Endothelial cell of umbilical vein (primary cell): ENCODE measurements at regions of chr16 and their contacts with region 1.

Region 1: DNA sequence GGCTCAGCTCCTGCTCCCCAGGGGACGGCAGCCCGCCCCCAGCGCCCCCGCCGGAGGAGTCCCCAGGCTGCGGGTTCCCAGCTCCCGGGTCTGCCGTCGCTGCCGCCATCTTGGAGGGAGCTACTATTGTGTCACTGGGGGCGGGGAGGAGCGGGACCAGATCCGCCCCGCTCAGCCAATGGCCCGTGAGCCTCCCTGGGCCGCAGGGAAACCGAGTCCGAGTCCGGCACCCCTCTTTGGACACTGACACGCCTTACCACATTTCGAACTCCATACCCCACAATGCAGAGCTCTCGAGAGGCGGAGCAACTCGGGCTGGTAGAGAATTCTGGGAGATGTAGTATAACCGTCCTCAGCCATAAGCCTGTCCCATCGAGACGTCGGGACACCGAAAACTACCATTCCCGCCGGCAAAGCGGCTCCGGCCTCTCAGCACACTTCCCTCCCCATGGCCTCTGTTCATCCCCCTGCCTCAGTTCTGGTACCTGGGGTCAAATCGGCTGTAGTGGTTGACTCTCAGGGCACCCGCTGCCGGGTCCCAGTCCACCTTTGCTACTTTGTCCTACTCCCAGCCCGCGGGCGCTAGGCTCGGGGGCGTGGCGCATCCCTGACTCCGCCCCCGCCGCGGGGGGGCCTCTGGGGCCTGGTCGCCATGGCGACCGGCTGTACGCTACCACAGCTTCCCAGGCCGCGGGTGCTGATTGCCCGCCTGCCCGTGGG is at the starts of genes RANBP10 and TSNAXIP1:
- DNase-seq: peak; percentile 100
- H3K4me3 ChIP-seq: peak within 1 kb of the TSS; percentile 71 to 90 (median 81)
- H3K27ac ChIP-seq: peak within 1 kb of the TSS; percentile 59
- H3K4me1 ChIP-seq: peaks cover 11% of the 10 kb centered on the region
- H3K27me3 ChIP-seq: no peaks in the 10 kb centered on the region
- CTCF ChIP-seq: no peak
- POLR2A ChIP-seq: peak; percentile 96
- total RNA-seq, gene RANBP10: 20.6 and 25.6 TPM in 2 replicates
- total RNA-seq, gene TSNAXIP1: 0.95 and 1.0 TPM in 2 replicates

Region 2: GRCh38 chr16:67719048-67719777 is 87.4 kb before region 1 on chr16 and contains the start of gene GFOD2:
- CTCF ChIA-PET with region 1: interaction called, 5 read pairs
- POLR2A ChIA-PET with region 1: interaction called, 7 read pairs
- dilution Hi-C with region 1: no loop called
- intact Hi-C with region 1: loop called (anchors 1 kb)
- DNase-seq: peak; percentile 98
- H3K4me3 ChIP-seq: peak within 1 kb of the TSS; percentile 78 to 93 (median 91)
- H3K27ac ChIP-seq: peak within 1 kb of the TSS; percentile 81
- H3K4me1 ChIP-seq: peaks cover 23% of the 10 kb centered on the region
- H3K27me3 ChIP-seq: no peaks in the 10 kb centered on the region
- CTCF ChIP-seq: no peak
- POLR2A ChIP-seq: peak; percentile 97
- total RNA-seq, gene GFOD2: 43.7 and 47.5 TPM in 2 replicates

Region 3: GRCh38 chr16:67773099-67773498 is 33.5 kb before region 1 on chr16:
- CTCF ChIA-PET with region 1: interaction called, 4 read pairs
- POLR2A ChIA-PET with region 1: interaction called, 7 read pairs
- dilution Hi-C with region 1: no loop called
- intact Hi-C with region 1: loop called (anchors 2 kb)
- DNase-seq: peak; percentile 86
- H3K4me3 ChIP-seq: no peak overlapping the region
- H3K27ac ChIP-seq: peak overlapping the region; percentile 72
- H3K4me1 ChIP-seq: peaks cover 53% of the 10 kb centered on the region
- H3K27me3 ChIP-seq: no peaks in the 10 kb centered on the region
- CTCF ChIP-seq: no peak
- POLR2A ChIP-seq: no peak